ENCODE measurements at regions of chr11 and their contacts with region 1.

Region 1: GRCh38 chr11:17384002-17384511 is 4.4 kb downstream of the KCNJ11 start:
- DNase-seq: peak; percentile 86
- H3K4me3 Mint-ChIP-seq: no peak overlapping the region
- H3K27ac Mint-ChIP-seq: no peak overlapping the region
- H3K4me1 Mint-ChIP-seq: peaks cover 7% of the 10 kb centered on the region
- H3K27me3 Mint-ChIP-seq: peaks cover 48% of the 10 kb centered on the region

Region 2: DNA sequence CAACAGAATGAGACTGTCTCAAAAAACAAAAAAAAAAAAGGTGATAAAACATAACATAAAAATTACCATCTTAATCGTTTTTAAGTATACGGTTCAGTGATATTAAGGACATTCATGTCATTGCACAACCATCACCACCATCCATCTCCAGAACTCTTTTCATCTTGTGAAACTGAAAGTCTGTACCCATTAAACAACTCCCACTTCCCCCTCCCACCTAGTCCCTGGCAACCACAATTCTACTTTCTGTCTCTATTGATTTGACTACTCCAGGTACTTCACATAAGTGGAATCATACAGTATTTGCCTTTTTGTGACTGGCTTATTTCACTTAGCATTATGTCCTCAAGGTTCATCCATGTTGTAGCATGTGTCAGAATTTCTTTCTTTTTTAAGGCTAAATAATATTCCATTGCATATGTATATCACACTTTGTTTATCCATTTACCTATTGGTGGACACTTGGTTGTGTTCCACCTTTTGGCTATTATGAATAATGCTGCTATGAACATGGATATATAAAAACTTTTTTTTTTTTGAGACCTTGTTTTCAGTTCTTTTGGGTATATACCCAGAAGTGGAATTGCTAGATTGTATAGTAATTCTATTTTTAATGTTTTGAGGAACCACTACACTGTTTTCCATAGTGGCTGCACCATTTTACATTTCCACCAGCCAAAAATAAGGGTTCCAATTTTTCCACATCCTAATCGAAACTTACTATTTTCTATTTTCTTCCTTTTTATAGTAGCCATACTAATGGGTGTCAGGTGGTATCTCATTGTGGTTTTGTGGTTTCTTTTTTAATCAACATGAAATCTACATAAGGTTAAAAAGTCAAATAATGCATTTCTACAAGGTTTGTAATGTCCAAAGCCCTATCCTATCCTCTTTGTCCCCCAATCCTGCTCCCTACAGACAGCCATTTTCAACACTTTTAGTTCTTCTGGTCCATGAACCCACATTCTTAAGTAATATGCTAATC is 152.9 kb before region 1 on chr11:
- CTCF ChIA-PET with region 1: interaction called, 26 read pairs
- DNase-seq: peak; percentile 61
- H3K4me3 Mint-ChIP-seq: no peak overlapping the region
- H3K27ac Mint-ChIP-seq: peak overlapping the region; percentile 34
- H3K4me1 Mint-ChIP-seq: peaks cover 25% of the 10 kb centered on the region
- H3K27me3 Mint-ChIP-seq: peaks cover 37% of the 10 kb centered on the region

Region 3: GRCh38 chr11:17498475-17498874 is 114.4 kb after region 1 on chr11:
- CTCF ChIA-PET with region 1: interaction called, 143 read pairs
- DNase-seq: no peak
- H3K4me3 Mint-ChIP-seq: no peak overlapping the region
- H3K27ac Mint-ChIP-seq: no peak overlapping the region
- H3K4me1 Mint-ChIP-seq: no peaks in the 10 kb centered on the region
- H3K27me3 Mint-ChIP-seq: peaks cover 34% of the 10 kb centered on the region

Region 4: GRCh38 chr11:17504330-17505107 is 120.5 kb after region 1 on chr11:
- CTCF ChIA-PET with region 1: interaction called, 143 read pairs
- DNase-seq: peak; percentile 88
- H3K4me3 Mint-ChIP-seq: no peak overlapping the region
- H3K27ac Mint-ChIP-seq: no peak overlapping the region
- H3K4me1 Mint-ChIP-seq: no peaks in the 10 kb centered on the region
- H3K27me3 Mint-ChIP-seq: peaks cover 39% of the 10 kb centered on the region

Measured in activated naive CD4-positive, alpha-beta T cell treated with anti-CD3 and anti-CD28 coated beads, Interleukin-2, amount 10 ng/mL, durations not matched to agents 7 days and 5 days (primary cell).